Activated naive CD4-positive, alpha-beta T cell treated with anti-CD3 and anti-CD28 coated beads for 36 hours (primary cell): ENCODE measurements at regions of chr6 and their contacts with region 1.

Region 1: GRCh38 chr6:52670502-52671409 is at the start of gene TMEM14A:
- DNase-seq: peak; percentile 93
- H3K4me3 Mint-ChIP-seq: peak within 1 kb of the TSS; percentile 82
- H3K27ac Mint-ChIP-seq: peak within 1 kb of the TSS; percentile 51
- H3K4me1 Mint-ChIP-seq: peaks cover 27% of the 10 kb centered on the region
- H3K27me3 Mint-ChIP-seq: no peaks in the 10 kb centered on the region
- total RNA-seq, gene TMEM14A: 10.4 to 11.0 TPM

Region 2: DNA sequence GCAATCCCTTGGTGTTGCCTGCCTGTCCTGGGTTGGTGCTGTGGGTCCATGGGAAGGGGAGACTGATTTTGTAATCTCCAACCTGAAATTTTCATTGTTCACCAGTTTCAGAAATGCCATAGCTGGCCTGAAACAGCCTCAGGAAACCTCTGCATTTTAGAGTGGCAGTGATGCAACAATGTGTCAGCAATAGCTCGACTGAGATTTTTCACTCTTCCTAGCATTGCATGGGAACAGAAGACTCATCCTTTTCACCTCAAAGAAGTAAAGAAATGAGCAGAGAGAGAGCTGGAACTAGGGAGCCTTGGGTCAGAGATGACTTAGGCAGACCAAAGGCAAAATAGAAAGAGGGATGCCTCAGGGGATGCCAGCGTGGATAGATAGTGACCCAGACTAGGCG is 23.6 kb before region 1 on chr6:
- CTCF ChIA-PET with region 1: interaction called, 12 read pairs
- intact Hi-C with region 1: no loop called
- DNase-seq: no peak
- H3K4me3 Mint-ChIP-seq: no peak overlapping the region
- H3K27ac Mint-ChIP-seq: no peak overlapping the region
- H3K4me1 Mint-ChIP-seq: peaks cover 13% of the 10 kb centered on the region
- H3K27me3 Mint-ChIP-seq: no peaks in the 10 kb centered on the region